ENCODE measurements at regions of chr2 and their contacts with region 1.

Region 1: DNA sequence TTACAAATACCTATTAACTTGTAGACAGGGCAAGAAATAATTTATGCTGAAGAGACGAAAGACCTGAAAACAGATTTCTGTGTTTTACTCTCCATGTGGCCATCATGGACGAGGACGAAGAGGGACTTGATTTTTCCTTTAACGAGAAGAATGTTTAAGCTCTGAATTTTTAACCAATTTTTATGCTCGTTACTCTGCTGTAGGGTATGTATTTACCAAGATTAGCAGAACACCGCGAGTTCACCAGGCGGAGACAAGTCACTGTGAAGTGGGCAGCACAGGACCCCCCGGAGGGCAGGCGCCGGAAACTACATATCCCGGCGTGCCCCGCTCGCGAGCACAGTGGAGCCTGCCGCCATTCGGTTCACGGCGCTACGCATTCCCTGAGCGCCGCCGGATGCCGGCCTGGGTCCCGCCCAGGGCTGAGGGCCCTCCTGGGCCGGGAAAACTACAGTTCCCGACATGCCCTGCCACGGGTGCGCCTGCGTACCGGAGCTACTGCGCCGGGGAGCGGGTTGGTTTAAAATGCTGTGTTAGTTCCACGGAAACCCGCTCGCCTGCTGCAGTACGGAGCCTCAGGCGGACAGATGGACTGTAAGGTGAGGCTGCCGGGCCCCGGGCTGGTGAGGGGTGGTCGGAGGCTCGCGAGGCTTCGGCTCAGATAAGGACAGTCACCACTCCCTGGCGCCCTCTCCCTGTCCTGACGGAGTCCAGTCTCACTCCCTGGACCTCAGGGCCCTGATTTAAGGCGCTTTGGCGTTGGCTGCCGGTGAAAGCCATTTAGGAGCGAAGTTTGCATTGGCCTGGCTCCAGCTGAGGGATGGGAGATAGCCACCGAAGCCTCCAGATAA is at the start of gene CCDC150:
- DNase-seq: peak; percentile 89 to 99 (median 94)

Region 2: DNA sequence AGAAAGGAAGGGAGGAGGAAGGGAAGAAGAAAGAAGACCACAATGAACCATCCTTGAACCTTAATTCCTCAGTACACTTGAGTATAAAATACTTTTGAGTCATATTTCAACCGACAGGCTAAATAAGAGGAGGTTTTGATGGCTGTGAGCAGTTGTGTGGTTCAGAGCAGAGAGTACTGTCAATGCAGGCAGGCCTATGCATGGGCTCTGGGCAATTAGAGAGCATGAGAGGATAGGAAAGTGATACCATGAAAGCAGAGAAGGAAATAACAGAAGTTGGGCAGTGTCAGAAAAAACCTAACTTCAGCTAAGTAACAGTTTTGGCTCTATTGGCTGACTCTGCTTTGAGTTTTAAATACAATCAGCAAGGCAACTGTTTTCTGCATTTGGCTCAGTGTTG is 344.4 kb before region 1 on chr2:
- intact Hi-C with region 1: loop called (anchors 5 kb)
- DNase-seq: no peak

Region 3: DNA sequence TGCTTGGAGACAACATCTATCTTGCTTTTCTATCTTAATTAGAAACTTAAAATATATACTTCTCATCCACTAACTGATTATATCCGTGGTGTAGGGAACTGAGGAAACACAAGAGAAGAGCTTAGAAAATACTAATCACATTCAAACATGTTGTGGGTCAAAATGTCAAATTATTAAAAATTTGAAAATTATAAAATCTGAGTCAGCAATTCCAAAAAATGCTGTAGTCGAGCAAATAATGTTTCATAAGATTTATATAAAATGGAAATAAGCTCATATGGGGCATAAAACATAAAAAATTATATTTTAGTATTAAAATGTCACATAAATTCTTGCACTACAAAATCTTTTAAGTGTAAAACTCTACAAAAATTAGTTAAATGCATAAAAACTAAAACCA is 766.2 kb after region 1 on chr2:
- intact Hi-C with region 1: no loop called
- DNase-seq: no peak

Measured in posterior cingulate gyrus (tissue), 11 donors.